ENCODE measurements at regions of chrX and their contacts with region 1.

Region 1: DNA sequence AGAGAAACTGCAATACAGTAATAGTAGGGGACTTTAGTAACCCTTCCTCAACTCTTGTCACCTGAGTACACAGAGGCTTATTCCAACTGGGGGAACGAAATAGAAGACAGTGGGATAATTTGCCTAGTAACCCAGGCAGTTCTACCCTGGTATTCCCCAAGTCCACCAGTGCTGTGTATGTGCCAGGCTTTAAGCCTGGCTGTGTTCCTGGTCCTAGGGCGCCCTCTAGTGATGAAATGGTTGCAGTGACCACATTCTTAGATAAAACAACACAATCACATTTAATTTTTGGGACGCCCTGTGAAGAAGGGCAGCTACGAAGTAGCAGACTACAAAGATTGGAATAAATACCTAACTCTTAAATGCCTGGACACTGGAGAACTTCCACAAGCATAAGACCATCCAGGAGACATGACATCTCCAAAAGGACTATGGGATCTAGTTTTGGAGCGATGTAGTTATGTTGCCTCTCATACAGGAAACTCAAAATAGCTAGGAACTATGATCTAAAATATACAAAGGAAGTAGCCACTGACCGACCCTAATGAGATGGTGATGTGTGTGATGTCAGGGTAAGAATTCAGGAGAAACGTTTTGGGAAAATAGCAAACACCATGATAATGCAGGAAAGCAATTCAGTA is 288.5 kb upstream of the ZCCHC13 start:
- DNase-seq: peak; percentile 77
- ATAC-seq: peak; percentile 90
- H3K4me3 ChIP-seq: no peak overlapping the region
- H3K27ac ChIP-seq: no peak overlapping the region
- H3K4me1 ChIP-seq: no peaks in the 10 kb centered on the region
- H3K27me3 ChIP-seq: no peaks in the 10 kb centered on the region
- CTCF ChIP-seq: peak; percentile 97
- POLR2A ChIP-seq: 0 out of 2 replicates have a peak, but pooled peaks have one; percentile 27
- RAD21 ChIP-seq: peak; percentile 98

Region 2: DNA sequence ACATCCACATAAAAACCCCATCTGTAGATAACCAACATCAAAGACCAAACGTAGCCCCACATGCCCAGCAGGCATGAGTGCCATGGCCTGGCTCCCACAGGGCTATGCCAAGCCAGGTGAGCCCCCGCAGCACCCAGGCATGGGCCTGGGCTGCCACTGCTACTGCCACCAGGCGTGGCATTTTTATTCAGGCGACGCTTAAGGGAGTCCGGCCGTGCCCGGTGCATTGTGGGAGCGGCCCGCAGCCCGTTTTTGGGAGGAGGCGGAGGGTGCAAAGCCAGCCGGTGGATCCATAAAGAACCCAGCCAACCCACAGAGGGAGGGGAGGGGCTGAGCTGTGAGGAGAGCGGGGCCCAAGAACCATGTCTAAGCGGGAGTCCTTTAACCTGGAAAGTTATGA is 246.6 kb before region 1 on chrX:
- CTCF ChIA-PET with region 1: no interaction called
- POLR2A ChIA-PET with region 1: no interaction called
- dilution Hi-C with region 1: no loop called
- in situ Hi-C with region 1: no loop called
- intact Hi-C with region 1: no loop called
- DNase-seq: no peak
- ATAC-seq: no peak
- H3K4me3 ChIP-seq: no peak overlapping the region
- H3K27ac ChIP-seq: no peak overlapping the region
- H3K4me1 ChIP-seq: no peaks in the 10 kb centered on the region
- H3K27me3 ChIP-seq: peaks cover 25% of the 10 kb centered on the region
- CTCF ChIP-seq: no peak
- POLR2A ChIP-seq: no peak
- RAD21 ChIP-seq: no peak

Region 3: GRCh38 chrX:74133156-74133796 is 117.8 kb after region 1 on chrX:
- CTCF ChIA-PET with region 1: no interaction called
- POLR2A ChIA-PET with region 1: no interaction called
- dilution Hi-C with region 1: no loop called
- in situ Hi-C with region 1: no loop called
- intact Hi-C with region 1: loop called (anchors 1 kb)
- DNase-seq: peak; percentile 80
- ATAC-seq: peak; percentile 99
- H3K4me3 ChIP-seq: no peak overlapping the region
- H3K27ac ChIP-seq: no peak overlapping the region
- H3K4me1 ChIP-seq: no peaks in the 10 kb centered on the region
- H3K27me3 ChIP-seq: peaks cover 2% of the 10 kb centered on the region; the same call in 1 of the 2 replicates
- CTCF ChIP-seq: peak; percentile 88
- POLR2A ChIP-seq: no peak
- RAD21 ChIP-seq: peak; percentile 89

Region 4: GRCh38 chrX:74980802-74981201 is 965.3 kb after region 1 on chrX:
- CTCF ChIA-PET with region 1: no interaction called
- POLR2A ChIA-PET with region 1: no interaction called
- dilution Hi-C with region 1: no loop called
- in situ Hi-C with region 1: no loop called
- intact Hi-C with region 1: no loop called
- DNase-seq: no peak
- ATAC-seq: no peak
- H3K4me3 ChIP-seq: no peak overlapping the region
- H3K27ac ChIP-seq: no peak overlapping the region
- H3K4me1 ChIP-seq: no peaks in the 10 kb centered on the region
- H3K27me3 ChIP-seq: no peaks in the 10 kb centered on the region
- CTCF ChIP-seq: no peak
- POLR2A ChIP-seq: no peak
- RAD21 ChIP-seq: no peak

Region 5: DNA sequence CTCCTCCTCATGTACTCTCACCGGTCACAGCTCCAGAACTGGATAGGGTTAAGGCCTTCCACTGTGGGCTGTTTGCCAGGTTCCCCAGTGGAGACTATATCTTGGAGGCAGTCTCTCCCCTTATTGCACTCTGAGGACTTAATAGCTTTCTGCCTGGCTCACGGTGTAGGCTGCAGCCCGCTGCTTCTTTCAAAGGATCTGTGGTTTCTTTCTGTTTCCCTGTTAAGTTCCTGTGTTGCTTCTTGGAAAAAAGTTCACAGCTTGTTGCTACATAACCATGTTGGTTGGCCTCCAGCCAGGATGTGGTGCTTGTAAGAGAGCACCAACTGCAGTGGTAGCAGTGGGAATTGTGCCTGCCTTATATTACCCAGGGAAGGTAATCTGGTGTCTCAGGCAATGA is 1532.3 kb after region 1 on chrX:
- CTCF ChIA-PET with region 1: no interaction called
- POLR2A ChIA-PET with region 1: no interaction called
- dilution Hi-C with region 1: no loop called
- in situ Hi-C with region 1: no loop called
- intact Hi-C with region 1: no loop called
- DNase-seq: no peak
- ATAC-seq: no peak
- H3K4me3 ChIP-seq: no peak overlapping the region
- H3K27ac ChIP-seq: no peak overlapping the region
- H3K4me1 ChIP-seq: no peaks in the 10 kb centered on the region
- H3K27me3 ChIP-seq: no peaks in the 10 kb centered on the region; the same call in 1 of the 2 replicates
- CTCF ChIP-seq: no peak
- POLR2A ChIP-seq: no peak
- RAD21 ChIP-seq: no peak

Measured in IMR-90 (cell line).